ENCODE measurements at regions of chr7 and their contacts with region 1.

Region 1: DNA sequence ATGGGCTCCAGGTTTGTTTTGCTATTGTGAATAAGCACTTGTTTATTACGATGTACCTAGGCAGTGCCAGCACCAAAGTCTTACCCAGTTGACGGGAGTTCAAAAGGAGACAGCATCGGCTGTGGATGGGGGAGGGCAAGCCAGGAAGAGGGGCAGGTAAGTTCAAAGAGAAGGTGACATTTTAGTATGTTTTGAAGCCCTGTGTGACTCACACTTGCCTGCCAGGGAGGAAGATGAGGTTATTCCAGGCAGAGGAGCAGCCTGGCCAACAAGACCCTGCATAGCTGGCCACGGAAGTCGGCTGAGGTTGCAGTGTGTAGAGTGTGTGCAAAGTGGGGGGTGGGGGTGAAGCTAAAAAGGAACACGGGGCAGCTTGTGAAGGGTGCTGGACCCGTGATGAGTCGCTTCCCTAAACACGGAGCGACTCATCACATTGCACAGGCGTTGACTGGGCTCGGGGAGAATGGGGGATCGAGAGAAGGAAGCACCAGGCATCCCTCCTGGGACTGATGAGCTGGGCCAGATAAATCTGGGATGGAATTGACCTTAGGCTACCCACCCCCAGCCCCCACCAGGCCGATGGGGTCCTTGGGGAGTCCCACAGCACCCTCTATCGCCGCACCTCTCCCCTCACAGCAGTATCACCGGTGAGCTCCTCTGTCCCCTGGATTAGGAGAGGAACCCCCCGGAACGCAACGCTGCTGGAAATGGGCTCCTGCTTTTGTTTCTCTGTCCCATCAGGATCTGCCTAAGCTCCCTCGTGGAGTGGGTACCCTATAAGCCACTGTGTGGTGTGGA is 97.9 kb upstream of the IKZF1 start:
- DNase-seq: no peak
- H3K4me3 ChIP-seq: no peak overlapping the region
- H3K27ac ChIP-seq: no peak overlapping the region
- H3K4me1 ChIP-seq: no peaks in the 10 kb centered on the region
- H3K27me3 ChIP-seq: peaks cover 2% of the 10 kb centered on the region
- CTCF ChIP-seq: no peak

Region 2: DNA sequence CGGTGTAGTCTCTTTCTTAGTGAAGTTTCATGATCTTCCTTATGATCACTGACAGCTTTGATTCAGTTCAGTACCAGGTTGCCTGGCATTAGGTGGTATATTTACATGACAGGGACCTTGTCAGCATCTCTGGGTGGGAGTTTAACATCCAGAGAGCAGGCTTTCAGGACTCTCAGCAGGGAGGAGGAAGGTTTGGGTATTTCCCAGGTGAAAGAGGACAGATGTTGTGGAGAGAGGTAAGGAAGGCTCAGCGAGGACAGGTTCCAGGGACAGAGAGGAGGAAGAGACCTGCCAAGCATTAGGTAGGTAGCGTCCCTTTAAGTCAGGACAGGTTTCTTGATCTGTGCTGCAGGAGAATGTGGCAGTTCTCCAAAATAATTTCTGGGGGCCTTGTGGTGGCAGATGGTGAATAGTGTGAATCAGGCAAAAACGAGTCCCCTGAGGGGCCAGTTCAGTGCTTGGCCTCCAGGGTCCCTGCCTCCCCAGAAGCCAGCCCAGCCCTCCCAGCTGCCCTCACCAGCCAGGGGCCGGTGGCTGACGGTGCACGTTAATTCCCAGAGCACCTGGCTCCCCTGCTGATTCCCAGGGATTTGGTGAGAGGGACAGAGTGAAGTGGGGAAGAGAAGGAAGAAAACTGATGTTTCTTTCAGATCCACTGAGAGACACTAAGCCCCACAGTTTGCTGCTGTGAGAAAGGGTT is 351.2 kb before region 1 on chr7:
- CTCF ChIA-PET with region 1: no interaction called
- dilution Hi-C with region 1: no loop called
- in situ Hi-C with region 1: no loop called
- intact Hi-C with region 1: no loop called
- DNase-seq: no peak
- H3K4me3 ChIP-seq: no peak overlapping the region
- H3K27ac ChIP-seq: no peak overlapping the region
- H3K4me1 ChIP-seq: no peaks in the 10 kb centered on the region
- H3K27me3 ChIP-seq: no peaks in the 10 kb centered on the region
- CTCF ChIP-seq: no peak

Region 3: DNA sequence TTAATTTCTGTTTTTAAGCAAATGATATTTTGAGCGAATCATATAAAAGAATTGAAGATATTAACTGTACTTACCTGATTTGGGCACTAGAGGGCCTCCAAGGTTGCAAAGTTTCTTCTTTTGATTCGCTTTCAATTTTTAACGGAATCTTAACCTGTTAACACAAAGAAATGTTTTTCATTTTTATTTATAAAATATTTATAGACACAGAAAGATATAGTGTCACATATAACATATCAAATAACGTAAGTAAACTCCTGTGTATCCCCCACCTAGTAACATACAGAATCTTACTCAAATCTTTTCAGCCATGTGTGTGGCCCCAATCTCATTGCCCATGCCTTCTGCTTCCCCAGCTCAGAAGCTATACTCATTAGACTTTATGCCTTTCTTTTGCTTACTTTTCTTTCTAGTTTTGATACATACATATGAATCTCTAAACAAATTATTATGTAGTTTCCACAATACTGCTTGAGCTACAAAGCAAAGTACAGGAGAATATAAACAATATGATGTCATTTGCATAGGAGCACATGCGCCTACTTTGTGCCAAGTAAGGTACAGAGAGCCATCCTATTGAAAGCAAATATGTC is 64.1 kb before region 1 on chr7:
- CTCF ChIA-PET with region 1: no interaction called
- dilution Hi-C with region 1: no loop called
- in situ Hi-C with region 1: no loop called
- intact Hi-C with region 1: loop called (anchors 2 kb)
- DNase-seq: no peak
- H3K4me3 ChIP-seq: no peak overlapping the region
- H3K27ac ChIP-seq: no peak overlapping the region
- H3K4me1 ChIP-seq: no peaks in the 10 kb centered on the region
- H3K27me3 ChIP-seq: no peaks in the 10 kb centered on the region
- CTCF ChIP-seq: peak; percentile 61 to 67

Region 4: GRCh38 chr7:50369143-50370026 is 162.7 kb after region 1 on chr7:
- CTCF ChIA-PET with region 1: no interaction called
- dilution Hi-C with region 1: no loop called
- in situ Hi-C with region 1: no loop called
- intact Hi-C with region 1: loop called (anchors 1 kb)
- DNase-seq: peak; percentile 3
- H3K4me3 ChIP-seq: no peak overlapping the region
- H3K27ac ChIP-seq: no peak overlapping the region
- H3K4me1 ChIP-seq: no peaks in the 10 kb centered on the region
- H3K27me3 ChIP-seq: no peaks in the 10 kb centered on the region
- CTCF ChIP-seq: peak; percentile 54 to 61

Region 5: DNA sequence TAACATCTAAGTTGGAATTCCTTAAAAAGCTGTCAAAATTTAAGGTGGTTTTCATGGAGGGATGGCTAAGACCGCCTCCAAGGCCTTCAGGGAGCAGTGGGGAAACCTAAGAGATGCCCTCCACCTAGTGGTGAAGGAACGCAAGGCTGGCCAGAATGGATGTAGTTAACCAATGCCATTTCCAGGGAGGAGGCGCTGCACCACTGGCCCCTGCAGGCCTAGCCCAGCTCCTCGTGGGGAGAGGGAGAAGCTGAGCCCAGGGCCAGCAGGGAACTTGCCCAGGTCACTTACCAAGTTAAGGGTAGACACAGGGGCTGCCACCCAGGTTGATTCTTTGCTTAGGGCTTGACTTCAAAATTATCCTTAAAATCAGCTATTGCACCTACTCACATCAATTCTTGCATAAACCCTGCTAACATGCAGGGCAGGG is 211.4 kb after region 1 on chr7:
- CTCF ChIA-PET with region 1: interaction called, 11 read pairs
- dilution Hi-C with region 1: no loop called
- in situ Hi-C with region 1: loop called (anchors 5 to 10 kb)
- intact Hi-C with region 1: loop called (anchors 1 kb)
- DNase-seq: peak; percentile 71
- H3K4me3 ChIP-seq: no peak overlapping the region
- H3K27ac ChIP-seq: no peak overlapping the region
- H3K4me1 ChIP-seq: no peaks in the 10 kb centered on the region
- H3K27me3 ChIP-seq: no peaks in the 10 kb centered on the region
- CTCF ChIP-seq: peak; percentile 97 to 98

Region 6: GRCh38 chr7:50632561-50633413 is 426.1 kb after region 1 on chr7:
- CTCF ChIA-PET with region 1: no interaction called
- dilution Hi-C with region 1: loop called (anchors 10 kb)
- in situ Hi-C with region 1: no loop called
- intact Hi-C with region 1: no loop called
- DNase-seq: peak; percentile 70
- H3K4me3 ChIP-seq: no peak overlapping the region
- H3K27ac ChIP-seq: no peak overlapping the region
- H3K4me1 ChIP-seq: peaks cover 3% of the 10 kb centered on the region
- H3K27me3 ChIP-seq: no peaks in the 10 kb centered on the region
- CTCF ChIP-seq: peak; percentile 92 to 94

Region 7: DNA sequence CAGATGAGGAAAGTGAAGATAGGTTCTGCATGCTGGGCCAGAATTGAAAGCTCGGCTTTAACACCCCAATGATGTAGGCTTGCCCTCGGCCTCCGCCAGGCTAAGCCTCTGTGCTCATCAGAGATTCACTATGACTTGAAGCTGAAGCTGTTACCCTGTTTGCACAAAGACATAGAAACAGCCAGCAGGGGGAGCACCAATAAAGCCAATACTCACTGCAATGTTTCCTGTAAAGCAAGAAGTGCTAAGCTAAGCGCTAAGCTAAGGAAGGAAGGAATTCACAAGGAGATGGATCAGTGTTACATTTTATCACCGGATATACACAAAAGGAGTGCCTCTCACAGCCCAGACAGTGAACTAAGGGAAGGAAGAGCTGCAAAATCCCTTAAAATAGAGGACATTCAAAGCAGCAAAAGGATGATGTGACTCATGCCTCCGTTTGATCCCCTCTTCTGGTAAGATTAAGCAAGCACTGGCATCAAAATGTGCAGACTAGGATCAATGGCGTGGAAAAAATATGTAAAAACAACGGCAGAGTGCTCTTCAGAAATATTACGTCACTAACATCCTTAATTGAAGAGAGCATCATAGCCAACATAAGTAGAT is 956.2 kb after region 1 on chr7:
- CTCF ChIA-PET with region 1: interaction called, 9 read pairs
- dilution Hi-C with region 1: no loop called
- in situ Hi-C with region 1: no loop called
- intact Hi-C with region 1: loop called (anchors 1 kb)
- DNase-seq: peak; percentile 72
- H3K4me3 ChIP-seq: no peak overlapping the region
- H3K27ac ChIP-seq: no peak overlapping the region
- H3K4me1 ChIP-seq: no peaks in the 10 kb centered on the region
- H3K27me3 ChIP-seq: peaks cover 2% of the 10 kb centered on the region
- CTCF ChIP-seq: peak; percentile 87 to 90